ENCODE measurements at regions of chr20 and their contacts with region 1.

Region 1: DNA sequence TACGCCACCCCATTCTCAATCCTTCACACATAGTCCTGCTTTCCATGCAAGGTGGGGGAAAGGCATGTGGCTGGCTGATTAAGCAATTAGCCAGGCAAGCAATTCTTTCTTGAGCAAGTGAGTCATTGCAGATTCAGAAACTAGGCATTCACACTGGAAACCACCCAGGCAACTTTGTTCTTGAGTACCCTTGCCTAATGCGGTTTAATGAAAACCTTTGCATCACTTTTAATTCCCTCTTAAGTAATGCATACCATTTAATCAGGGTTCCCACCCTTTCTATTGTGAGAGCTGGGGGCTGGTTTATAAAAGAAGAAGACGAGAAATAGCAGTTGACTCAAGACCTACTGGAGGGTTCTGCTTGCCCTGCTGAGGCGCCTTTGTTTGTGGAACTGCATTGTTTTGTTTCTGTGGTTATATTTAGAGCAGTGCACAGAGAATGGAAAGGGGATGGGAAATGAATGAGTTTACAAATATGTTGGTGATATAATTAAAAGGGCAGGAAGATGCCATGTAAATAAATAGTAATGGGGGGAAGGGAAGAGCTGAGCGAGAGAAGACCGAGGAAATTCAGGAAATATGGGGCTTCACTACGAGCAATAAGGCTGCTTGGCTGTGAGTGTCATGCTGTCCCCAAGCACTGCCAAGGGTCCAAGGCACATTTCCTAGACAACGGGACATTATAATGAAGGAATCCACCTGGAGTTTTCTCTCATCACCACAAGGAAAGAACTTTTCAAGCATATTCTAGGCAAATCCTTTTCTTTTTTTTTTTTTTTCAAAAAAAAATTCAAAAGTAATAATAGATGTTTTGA is 48.8 kb upstream of the TSHZ2 start:
- DNase-seq: no peak
- H3K4me3 ChIP-seq: no peak overlapping the region
- H3K27ac ChIP-seq: no peak overlapping the region
- H3K4me1 ChIP-seq: no peaks in the 10 kb centered on the region
- H3K27me3 ChIP-seq: no peaks in the 10 kb centered on the region
- CTCF ChIP-seq: no peak
- EP300 ChIP-seq: no peak
- POLR2A ChIP-seq: no peak

Region 2: DNA sequence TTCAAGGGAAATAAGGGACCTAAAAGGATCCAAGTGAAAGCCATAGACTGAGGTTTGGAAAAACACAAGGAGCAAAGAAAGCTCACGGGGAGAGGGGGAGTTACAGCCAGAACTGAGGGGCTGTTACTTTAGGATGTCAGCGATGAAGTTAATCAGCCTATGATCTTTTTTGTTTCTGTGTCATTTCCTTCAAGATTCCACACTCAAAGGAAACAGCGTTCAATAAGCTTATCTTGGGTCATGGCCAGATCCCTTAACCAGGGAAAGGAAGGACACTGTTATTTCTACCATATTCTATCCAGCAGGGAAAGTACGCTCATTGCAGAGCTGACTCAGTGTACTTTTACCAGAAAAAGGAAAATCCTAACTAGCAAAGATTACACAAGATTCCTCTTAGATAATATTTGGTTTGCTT is 1417.3 kb after region 1 on chr20:
- in situ Hi-C with region 1: no loop called
- intact Hi-C with region 1: loop called (anchors 5 kb)
- DNase-seq: no peak
- H3K4me3 ChIP-seq: no peak overlapping the region
- H3K27ac ChIP-seq: no peak overlapping the region
- H3K4me1 ChIP-seq: peaks cover 0 to 14% (median 7%) of the 10 kb centered on the region in 4 donors
- H3K27me3 ChIP-seq: no peaks in the 10 kb centered on the region
- CTCF ChIP-seq: no peak
- EP300 ChIP-seq: no peak
- POLR2A ChIP-seq: no peak

Measured in transverse colon (tissue), 4 donors.